ENCODE measurements at regions of chr3 and their contacts with region 1.

Region 1: DNA sequence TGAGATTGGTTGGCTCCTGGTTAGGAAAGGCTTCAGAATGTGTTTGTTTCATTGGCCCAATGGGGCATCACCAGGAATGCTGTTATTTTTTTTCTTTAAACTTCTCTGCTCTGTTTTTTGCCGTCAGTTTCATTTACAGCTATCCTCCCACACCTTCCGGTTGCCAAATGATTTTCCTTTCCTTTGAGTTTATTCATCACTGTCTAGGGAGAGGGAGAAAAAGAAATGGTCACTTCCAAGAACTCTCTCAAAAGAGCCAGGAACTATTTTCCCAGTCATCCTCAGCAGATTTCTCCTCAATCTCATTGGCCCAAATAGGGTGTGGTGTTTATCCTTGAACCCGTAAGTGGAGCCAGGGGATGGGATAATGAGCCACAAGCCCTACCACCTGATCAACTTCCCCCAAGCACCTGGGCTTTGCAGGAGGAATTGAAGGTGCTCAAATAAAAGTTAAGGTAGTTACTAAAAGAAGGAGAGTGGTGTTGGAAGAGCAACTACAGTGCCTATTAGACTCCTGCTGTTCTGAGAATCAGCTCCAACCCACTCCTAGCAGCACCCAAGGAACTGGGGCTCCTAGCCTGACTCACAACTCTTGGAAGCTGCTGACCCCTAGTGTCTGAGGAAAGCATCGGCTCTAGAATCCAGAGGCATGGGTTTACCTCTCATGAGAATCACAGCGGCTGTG is 183.8 kb upstream of the IL12A start:
- DNase-seq: peak; percentile 43 to 52
- ATAC-seq: peak; percentile 86 to 95 (median 94)
- H3K4me3 ChIP-seq: no peak overlapping the region
- H3K27ac ChIP-seq: no peak overlapping the region
- H3K4me1 ChIP-seq: peaks cover 12% of the 10 kb centered on the region
- H3K27me3 ChIP-seq: no peaks in the 10 kb centered on the region
- CTCF ChIP-seq: peak; percentile 88

Region 2: DNA sequence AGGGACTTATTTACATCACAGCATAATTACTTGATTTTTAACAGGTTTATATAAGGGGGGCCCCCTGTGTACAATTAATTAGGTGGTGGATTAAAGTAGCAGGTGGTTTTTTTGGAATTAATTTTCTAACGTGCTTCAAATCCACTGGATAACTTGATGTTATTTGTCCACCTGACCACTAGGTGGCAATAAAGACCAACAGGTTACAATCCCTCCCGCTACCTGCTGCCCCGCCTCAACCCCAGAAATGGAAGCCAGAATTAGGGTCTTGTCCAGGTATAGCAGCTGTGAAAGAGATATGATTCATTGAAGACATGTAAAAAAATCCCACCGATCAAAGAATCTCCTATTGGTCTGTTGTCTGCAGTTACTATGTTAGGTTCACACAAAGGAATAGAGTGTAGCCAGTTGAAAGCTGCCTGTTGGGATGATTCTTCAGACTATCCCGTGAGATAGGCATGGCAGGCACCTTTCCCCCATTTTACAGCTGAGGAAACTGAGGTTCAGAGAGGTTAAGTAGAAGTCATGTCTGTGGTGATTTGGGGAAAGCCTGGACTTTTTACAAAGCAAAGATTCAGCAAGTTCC is 959.0 kb before region 1 on chr3:
- intact Hi-C with region 1: loop called in 1 of 2 experiments (anchors 10 kb)
- DNase-seq: no peak
- ATAC-seq: peak in 2 of 4 donors; percentile 49 to 67
- H3K4me3 ChIP-seq: no peak overlapping the region
- H3K27ac ChIP-seq: no peak overlapping the region
- H3K4me1 ChIP-seq: no peaks in the 10 kb centered on the region
- H3K27me3 ChIP-seq: no peaks in the 10 kb centered on the region
- CTCF ChIP-seq: peak; percentile 70

Region 3: GRCh38 chr3:159260049-159260662 is 544.7 kb before region 1 on chr3:
- intact Hi-C with region 1: loop called (anchors 5 kb)
- DNase-seq: no peak
- ATAC-seq: peak in 2 of 4 donors; percentile 50 to 74
- H3K4me3 ChIP-seq: no peak overlapping the region
- H3K27ac ChIP-seq: no peak overlapping the region
- H3K4me1 ChIP-seq: no peaks in the 10 kb centered on the region
- H3K27me3 ChIP-seq: no peaks in the 10 kb centered on the region
- CTCF ChIP-seq: peak; percentile 83

Region 4: DNA sequence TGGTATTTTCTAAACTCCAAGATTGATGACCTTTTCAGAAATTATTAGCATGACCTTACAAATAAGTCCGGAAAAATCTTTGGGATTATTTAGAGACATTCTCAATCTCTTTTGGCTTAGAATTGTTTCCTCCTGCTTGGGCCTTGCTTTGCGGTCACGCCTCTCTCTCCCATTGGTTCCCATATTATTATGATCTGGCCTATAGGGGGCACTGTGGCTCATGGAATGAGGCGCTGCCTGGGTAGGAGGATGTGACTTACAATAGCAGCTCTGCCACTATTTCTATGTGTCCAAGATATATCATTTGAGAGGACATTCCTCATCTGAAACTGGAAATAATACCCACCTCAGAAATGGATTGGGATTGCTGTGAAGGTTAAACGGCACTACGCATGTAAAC is 538.1 kb before region 1 on chr3:
- intact Hi-C with region 1: loop called (anchors 5 kb)
- DNase-seq: no peak
- ATAC-seq: no peak
- H3K4me3 ChIP-seq: no peak overlapping the region
- H3K27ac ChIP-seq: no peak overlapping the region
- H3K4me1 ChIP-seq: no peaks in the 10 kb centered on the region
- H3K27me3 ChIP-seq: no peaks in the 10 kb centered on the region
- CTCF ChIP-seq: peak; percentile 13

Region 5: DNA sequence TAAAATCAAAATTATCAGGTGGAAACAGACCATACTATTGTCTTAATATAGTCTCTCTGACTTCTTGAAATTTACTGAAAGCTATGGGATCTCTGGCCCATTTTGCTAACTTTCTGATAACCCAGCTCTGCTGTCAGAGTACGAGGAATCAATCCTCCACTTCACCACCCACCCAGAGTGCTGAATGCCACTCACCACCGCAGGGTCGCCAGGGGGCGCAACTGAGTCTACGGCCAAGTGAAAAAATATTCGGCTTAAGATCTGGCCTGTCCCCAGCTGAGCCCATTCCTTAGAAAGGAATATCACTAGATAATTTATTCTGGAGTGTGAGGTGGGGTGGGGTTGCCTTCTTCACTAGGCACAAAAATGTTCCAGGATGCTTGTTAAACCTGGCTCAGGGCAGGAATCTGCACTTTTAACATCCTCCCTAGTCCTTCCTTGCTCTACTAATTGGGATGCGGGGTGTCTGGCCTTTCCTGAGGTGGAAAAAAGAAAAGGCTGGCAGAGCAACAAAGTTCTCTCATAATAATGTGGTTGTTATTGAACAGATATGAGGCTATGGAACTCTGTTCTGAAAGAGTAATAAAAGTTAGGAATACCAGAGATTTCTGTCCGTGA is 482.4 kb before region 1 on chr3:
- intact Hi-C with region 1: loop called (anchors 2 to 5 kb)
- DNase-seq: peak; percentile 21 to 53
- ATAC-seq: no peak
- H3K4me3 ChIP-seq: no peak overlapping the region
- H3K27ac ChIP-seq: no peak overlapping the region
- H3K4me1 ChIP-seq: no peaks in the 10 kb centered on the region
- H3K27me3 ChIP-seq: no peaks in the 10 kb centered on the region
- CTCF ChIP-seq: peak; percentile 55

Region 6: GRCh38 chr3:159616212-159616825 is 188.5 kb before region 1 on chr3:
- intact Hi-C with region 1: loop called (anchors 2 to 5 kb)
- DNase-seq: no peak
- ATAC-seq: peak in 1 of 4 donors; percentile 49
- H3K4me3 ChIP-seq: no peak overlapping the region
- H3K27ac ChIP-seq: no peak overlapping the region
- H3K4me1 ChIP-seq: no peaks in the 10 kb centered on the region
- H3K27me3 ChIP-seq: no peaks in the 10 kb centered on the region
- CTCF ChIP-seq: peak; percentile 44

Region 7: DNA sequence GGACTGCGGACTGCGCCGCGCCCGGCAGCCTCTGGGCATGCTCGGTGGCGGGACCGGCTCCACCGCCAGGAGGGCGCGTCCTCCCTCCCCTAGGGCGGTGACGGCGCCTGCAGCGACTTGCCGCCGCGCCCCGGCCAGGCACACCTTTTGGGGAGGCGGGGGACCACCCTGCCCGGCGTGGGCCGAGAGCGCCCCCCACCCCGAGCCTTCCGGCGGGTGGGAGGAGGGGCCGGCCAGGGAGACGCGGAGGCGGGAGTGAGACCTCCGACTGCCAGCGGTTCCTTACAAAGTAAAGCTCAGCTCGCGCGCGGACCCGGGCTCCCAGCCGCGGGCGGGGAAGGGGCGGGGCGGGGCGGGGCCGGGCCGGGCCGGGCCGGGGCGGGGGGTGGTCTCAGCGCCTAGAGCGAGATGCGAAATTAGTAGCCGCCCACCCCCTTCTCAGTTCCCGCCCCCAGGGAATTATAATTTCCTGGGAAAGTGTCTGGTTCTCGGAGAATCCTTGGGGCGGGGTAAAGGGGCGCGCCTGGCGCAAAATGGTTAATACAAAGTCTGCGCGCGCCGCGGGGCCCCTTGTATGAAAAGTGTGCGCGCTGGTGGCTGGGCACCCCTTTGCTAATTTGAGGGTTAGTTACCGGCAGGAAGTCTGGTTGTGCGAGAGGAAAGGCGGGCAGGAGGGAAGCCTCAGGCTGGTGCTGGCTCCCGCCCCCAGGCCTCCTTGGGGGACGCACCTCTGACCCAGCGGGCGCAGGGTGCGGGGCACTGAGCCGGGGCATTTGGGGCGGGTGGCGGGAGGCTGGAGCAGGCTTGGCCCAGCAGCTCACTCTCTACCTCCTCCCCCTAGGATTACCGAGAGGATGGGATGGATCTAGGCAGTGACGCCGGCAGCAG is 41.0 kb before region 1 on chr3:
- intact Hi-C with region 1: loop called in 1 of 2 experiments (anchors 1 kb)
- DNase-seq: peak; percentile 67 to 75
- ATAC-seq: peak; percentile 59 to 79 (median 68)
- H3K4me3 ChIP-seq: peak overlapping the region; percentile 82
- H3K27ac ChIP-seq: peak overlapping the region; percentile 86
- H3K4me1 ChIP-seq: peaks cover 15% of the 10 kb centered on the region
- H3K27me3 ChIP-seq: peaks cover 0 to 42% (median 0%) of the 10 kb centered on the region in 3 donors
- CTCF ChIP-seq: peak; percentile 31

Measured in psoas muscle (tissue), 8 donors.